Heart right ventricle (tissue), 16 donors: ENCODE measurements at regions of chr2 and their contacts with region 1.

Region 1: DNA sequence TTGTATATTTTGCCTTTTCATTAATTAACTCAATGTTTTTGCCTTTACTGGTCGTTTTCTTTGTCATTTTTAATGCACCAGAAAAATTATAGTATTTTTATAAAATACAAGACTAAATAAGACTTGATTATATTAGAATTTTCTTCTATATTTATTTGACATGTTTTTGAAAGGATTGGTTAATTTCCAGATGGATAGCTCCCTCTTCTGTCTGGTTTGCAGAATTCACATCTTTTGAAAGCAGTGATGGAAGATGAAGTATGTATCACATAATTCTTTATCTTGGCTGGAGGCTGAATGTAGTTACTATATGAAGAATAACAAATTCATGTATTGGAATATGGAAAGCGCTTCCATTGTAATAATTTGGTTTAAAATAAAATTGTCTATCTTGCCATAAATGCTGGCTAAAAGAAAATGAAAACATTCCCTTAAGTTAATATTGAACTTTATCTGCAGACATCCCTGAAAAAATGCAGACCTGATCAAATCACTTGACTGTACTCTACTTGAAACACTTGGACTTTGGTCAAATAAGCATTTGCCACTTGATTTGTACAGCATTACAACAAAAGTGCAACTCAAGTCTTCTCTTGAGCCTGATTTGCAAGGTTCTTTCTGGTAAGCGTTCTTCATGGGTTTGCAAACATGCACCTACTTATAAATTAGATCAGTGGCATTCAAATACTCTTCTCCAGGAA is 86.3 kb upstream of the EFEMP1 start:
- DNase-seq: no peak
- ATAC-seq: peak in 3 of 8 donors; percentile 53 to 68 (median 55)
- H3K4me3 ChIP-seq: no peak overlapping the region
- H3K27ac ChIP-seq: peak overlapping the region in 1 of 10 donors; percentile 3
- H3K4me1 ChIP-seq: peaks cover 0 to 22% (median 11%) of the 10 kb centered on the region in 9 donors
- H3K27me3 ChIP-seq: no peaks in the 10 kb centered on the region
- CTCF ChIP-seq: peak in 8 of 9 donors; percentile 6 to 74 (median 58)

Region 2: GRCh38 chr2:55718165-55719008 is 291.5 kb before region 1 on chr2:
- intact Hi-C with region 1: loop called in 9 of 10 experiments (anchors 2 to 10 kb)
- DNase-seq: peak in 1 of 2 donors; percentile 54
- ATAC-seq: peak in 1 of 8 donors; percentile 54
- H3K4me3 ChIP-seq: no peak overlapping the region
- H3K27ac ChIP-seq: no peak overlapping the region
- H3K4me1 ChIP-seq: no peaks in the 10 kb centered on the region
- H3K27me3 ChIP-seq: peaks cover 0 to 13% (median 0%) of the 10 kb centered on the region in 7 donors
- CTCF ChIP-seq: peak; percentile 59 to 87 (median 85)

Region 3: GRCh38 chr2:55771612-55772011 is 238.3 kb before region 1 on chr2:
- intact Hi-C with region 1: loop called in 5 of 10 experiments (anchors 5 kb)
- DNase-seq: no peak
- ATAC-seq: no peak
- H3K4me3 ChIP-seq: no peak overlapping the region
- H3K27ac ChIP-seq: no peak overlapping the region
- H3K4me1 ChIP-seq: no peaks in the 10 kb centered on the region
- H3K27me3 ChIP-seq: peaks cover 0 to 10% (median 0%) of the 10 kb centered on the region in 7 donors
- CTCF ChIP-seq: peak; percentile 18 to 69 (median 64)

Region 4: GRCh38 chr2:55966401-55967118 is 43.3 kb before region 1 on chr2:
- intact Hi-C with region 1: loop called in 1 of 10 experiments (anchors 5 kb)
- DNase-seq: peak; percentile 19 to 31
- ATAC-seq: peak in 7 of 8 donors; percentile 43 to 83 (median 70)
- H3K4me3 ChIP-seq: no peak overlapping the region
- H3K27ac ChIP-seq: peak overlapping the region in 5 of 10 donors; percentile 36 to 67 (median 53)
- H3K4me1 ChIP-seq: peaks cover 0 to 17% (median 3%) of the 10 kb centered on the region in 9 donors
- H3K27me3 ChIP-seq: peaks cover 0 to 4% (median 0%) of the 10 kb centered on the region in 7 donors
- CTCF ChIP-seq: no peak

Region 5: DNA sequence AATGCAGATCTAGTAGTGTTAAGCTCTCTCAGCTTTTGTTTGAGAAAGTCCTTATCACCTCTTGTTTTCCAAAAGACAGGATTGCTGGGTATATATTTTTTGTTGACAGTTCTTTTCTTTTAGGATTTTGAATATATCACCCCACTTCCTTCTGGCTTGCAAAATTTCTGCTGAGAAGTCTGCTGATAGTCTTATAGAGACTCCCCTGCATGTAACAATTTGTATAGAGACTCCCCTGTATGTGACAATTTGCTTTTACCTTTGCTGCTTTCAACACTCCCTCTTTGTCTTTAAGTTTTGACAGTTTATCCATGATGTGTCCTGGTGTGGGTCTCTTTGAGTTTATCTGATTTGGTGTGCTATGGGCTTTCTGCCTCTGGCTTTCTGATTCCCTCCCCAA is 58.8 kb after region 1 on chr2:
- intact Hi-C with region 1: no loop called
- DNase-seq: no peak
- ATAC-seq: no peak
- H3K4me3 ChIP-seq: no peak overlapping the region
- H3K27ac ChIP-seq: no peak overlapping the region
- H3K4me1 ChIP-seq: no peaks in the 10 kb centered on the region
- H3K27me3 ChIP-seq: no peaks in the 10 kb centered on the region
- CTCF ChIP-seq: no peak